Common myeloid progenitor, CD34-positive (primary cell): ENCODE measurements at regions of chr1 and their contacts with region 1.

Region 1: GRCh38 chr1:37931361-37932158 is 15.3 kb downstream of the INPP5B start:
- DNase-seq: peak; percentile 96 to 97 (median 97)
- H3K4me3 ChIP-seq: peak overlapping the region; percentile 57 to 98 (median 95)
- H3K27ac ChIP-seq: peak overlapping the region; percentile 79 to 85
- H3K4me1 ChIP-seq: peaks cover 7 to 35% (median 26%) of the 10 kb centered on the region in 4 experiments
- H3K27me3 ChIP-seq: no peaks in the 10 kb centered on the region

Region 2: GRCh38 chr1:37673920-37674319 is 257.6 kb before region 1 on chr1:
- CTCF ChIA-PET with region 1: no interaction called
- POLR2A ChIA-PET with region 1: no interaction called
- DNase-seq: no peak
- H3K4me3 ChIP-seq: no peak overlapping the region
- H3K27ac ChIP-seq: no peak overlapping the region
- H3K4me1 ChIP-seq: peaks cover 3 to 17% (median 8%) of the 10 kb centered on the region in 4 experiments
- H3K27me3 ChIP-seq: peaks cover 0 to 16% (median 4%) of the 10 kb centered on the region in 5 experiments

Region 3: GRCh38 chr1:37890378-37891014 is 41.1 kb before region 1 on chr1:
- CTCF ChIA-PET with region 1: interaction called, 115 read pairs
- POLR2A ChIA-PET with region 1: no interaction called
- DNase-seq: peak; percentile 69 to 80 (median 77)
- H3K4me3 ChIP-seq: no peak overlapping the region
- H3K27ac ChIP-seq: no peak overlapping the region
- H3K4me1 ChIP-seq: peaks cover 0 to 17% (median 3%) of the 10 kb centered on the region in 4 experiments
- H3K27me3 ChIP-seq: no peaks in the 10 kb centered on the region

Region 4: GRCh38 chr1:37919277-37919676 is 12.3 kb before region 1 on chr1:
- CTCF ChIA-PET with region 1: interaction called, 14 read pairs
- POLR2A ChIA-PET with region 1: interaction called, 7 read pairs
- DNase-seq: peak; percentile 52 to 68 (median 68)
- H3K4me3 ChIP-seq: no peak overlapping the region
- H3K27ac ChIP-seq: no peak overlapping the region
- H3K4me1 ChIP-seq: peaks cover 5 to 58% (median 41%) of the 10 kb centered on the region in 4 experiments
- H3K27me3 ChIP-seq: no peaks in the 10 kb centered on the region

Region 5: GRCh38 chr1:37946703-37947360 is 15.3 kb after region 1 on chr1 and contains the start of gene INPP5B:
- CTCF ChIA-PET with region 1: interaction called, 12 read pairs
- POLR2A ChIA-PET with region 1: no interaction called
- DNase-seq: peak; percentile 78 to 91 (median 85)
- H3K4me3 ChIP-seq: peak within 1 kb of the TSS; percentile 61 to 99 (median 86)
- H3K27ac ChIP-seq: peak within 1 kb of the TSS; percentile 67 to 87
- H3K4me1 ChIP-seq: peaks cover 2 to 22% (median 14%) of the 10 kb centered on the region in 4 experiments
- H3K27me3 ChIP-seq: no peaks in the 10 kb centered on the region